BJ (cell line): ENCODE measurements at regions of chr4 and their contacts with region 1.

Region 1: GRCh38 chr4:156347412-156348075 is 393.9 kb upstream of the CTSO start:
- DNase-seq: peak; percentile 6
- H3K4me3 ChIP-seq: no peak overlapping the region
- H3K27me3 ChIP-seq: no peaks in the 10 kb centered on the region
- CTCF ChIP-seq: no peak

Region 2: GRCh38 chr4:156188596-156188995 is 158.9 kb before region 1 on chr4:
- CTCF ChIA-PET with region 1: no interaction called
- POLR2A ChIA-PET with region 1: interaction called, 20 read pairs
- DNase-seq: no peak
- H3K4me3 ChIP-seq: no peak overlapping the region
- H3K27me3 ChIP-seq: no peaks in the 10 kb centered on the region
- CTCF ChIP-seq: no peak